HEK293 (cell line): ENCODE measurements at regions of chr2 and their contacts with region 1.

Region 1: DNA sequence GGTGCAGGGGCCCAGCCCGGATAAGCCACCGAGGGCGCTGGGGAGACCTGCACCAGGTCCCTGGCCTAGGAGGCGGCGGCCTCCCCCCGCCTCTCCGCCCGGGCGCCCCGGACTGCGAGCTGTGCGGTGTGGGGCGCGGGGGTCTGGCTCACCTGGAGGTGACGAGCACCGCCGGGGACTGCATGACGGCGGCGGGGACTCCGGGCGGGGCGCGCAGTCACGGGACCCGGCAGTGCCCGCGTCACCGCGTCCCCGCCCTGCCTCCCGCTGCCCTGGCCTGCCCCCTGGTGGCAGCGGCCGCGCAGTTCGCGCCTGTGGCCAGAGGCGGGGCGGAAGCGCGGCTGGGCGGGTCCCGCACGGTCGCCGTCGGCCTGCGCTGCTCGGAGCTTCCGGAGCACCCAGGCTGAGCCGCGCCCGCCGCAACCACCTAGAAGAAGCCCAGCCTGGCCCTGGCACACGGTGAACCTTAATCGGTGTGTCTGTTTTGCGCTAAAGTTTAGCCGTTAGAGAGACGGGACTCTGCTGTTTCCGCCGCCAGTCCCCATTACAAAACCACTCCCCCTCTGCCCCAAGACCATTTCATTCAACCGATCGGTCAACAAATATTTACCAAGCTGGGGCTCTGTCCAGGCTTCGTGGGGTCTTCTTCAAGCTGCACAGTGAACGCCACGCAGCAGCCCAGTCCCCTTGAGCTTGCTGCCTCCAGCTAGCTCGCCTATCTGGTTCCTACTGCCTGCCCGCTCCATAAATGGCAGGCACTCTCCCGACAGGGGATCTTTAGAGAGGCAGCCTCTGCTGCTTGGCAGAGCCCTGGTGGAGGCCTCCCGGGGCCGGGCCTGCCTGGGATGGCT is at the start of gene HS1BP3:
- H3K4me3 ChIP-seq: peak within 1 kb of the TSS; percentile 66
- H3K27ac ChIP-seq: peak within 1 kb of the TSS; percentile 43; the same call in 1 of the 2 replicates
- H3K4me1 ChIP-seq: no peaks in the 10 kb centered on the region
- CTCF ChIP-seq: no peak; the same call in 1 of the 2 replicates

Region 2: DNA sequence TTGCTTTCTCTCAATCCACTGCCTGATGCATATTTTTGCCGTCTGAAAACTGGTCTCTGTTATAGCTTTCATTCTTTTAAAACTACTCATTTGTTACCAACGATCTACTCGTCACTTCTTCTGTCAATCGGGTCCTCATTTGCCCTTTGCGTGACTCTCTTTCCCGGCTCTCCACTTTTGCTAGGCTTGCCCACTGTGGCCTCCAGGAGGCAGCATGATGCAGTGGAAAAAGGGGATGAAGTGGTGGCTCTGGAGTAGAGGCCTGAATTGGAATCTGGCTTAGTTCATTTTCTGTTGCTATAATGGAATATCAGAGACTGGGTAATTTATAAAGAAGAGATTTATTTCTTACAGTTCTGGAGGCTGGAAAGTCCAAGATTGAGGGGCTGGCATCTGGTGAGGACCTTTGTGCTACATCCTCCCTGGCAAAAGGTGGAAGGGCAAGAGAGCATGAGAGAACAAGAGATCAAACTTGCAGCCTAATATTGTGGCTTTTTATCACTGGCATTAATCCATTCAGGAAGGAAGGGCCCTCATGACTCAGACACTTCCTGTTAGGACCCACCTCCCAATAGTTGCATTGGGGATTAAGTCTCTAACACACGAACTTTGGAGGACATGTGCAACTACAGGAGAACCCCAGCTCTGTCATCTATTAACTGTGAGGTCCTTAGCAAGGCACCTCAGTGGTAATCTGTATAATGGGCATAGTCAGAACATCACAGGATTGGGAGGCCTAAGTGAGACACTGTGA is 31.2 kb after region 1 on chr2:
- CTCF ChIA-PET with region 1: interaction called, 11 read pairs
- POLR2A ChIA-PET with region 1: no interaction called
- H3K4me3 ChIP-seq: no peak overlapping the region
- H3K27ac ChIP-seq: no peak overlapping the region
- H3K4me1 ChIP-seq: no peaks in the 10 kb centered on the region
- CTCF ChIP-seq: no peak